ENCODE measurements at regions of chr13 and their contacts with region 1.

Region 1: GRCh38 chr13:75482070-75482819 is at the start of gene TBC1D4:
- DNase-seq: peak in 1 of 2 experiments; percentile 88
- H3K4me3 ChIP-seq: peak within 1 kb of the TSS; percentile 75 to 90 (median 83)
- H3K27ac ChIP-seq: no peak within 1 kb of the TSS
- H3K4me1 ChIP-seq: peaks cover 0 to 7% (median 1%) of the 10 kb centered on the region in 4 experiments; a peak in 2 of 7 replicates
- H3K27me3 ChIP-seq: no peaks in the 10 kb centered on the region
- CTCF ChIP-seq: peak; percentile 50 to 76 (median 65)
- EP300 ChIP-seq: no peak; a peak in 1 of 3 replicates
- POLR2A ChIP-seq: peak; percentile 39 to 68
- RAD21 ChIP-seq: peak; percentile 54 to 68
- total RNA-seq, gene TBC1D4: 37.5 and 39.0 TPM in 2 replicates

Region 2: GRCh38 chr13:75372517-75372916 is 109.7 kb before region 1 on chr13:
- CTCF ChIA-PET with region 1: interaction called, 46 read pairs
- POLR2A ChIA-PET with region 1: no interaction called
- DNase-seq: no peak
- H3K4me3 ChIP-seq: no peak overlapping the region
- H3K27ac ChIP-seq: no peak overlapping the region
- H3K4me1 ChIP-seq: peaks cover 0 to 5% (median 1%) of the 10 kb centered on the region in 4 experiments; a peak in 5 of 7 replicates
- H3K27me3 ChIP-seq: no peaks in the 10 kb centered on the region
- CTCF ChIP-seq: peak in 2 of 3 experiments; percentile 33 to 38; a peak in 2 of 4 replicates
- EP300 ChIP-seq: no peak
- POLR2A ChIP-seq: no peak
- RAD21 ChIP-seq: peak; percentile 42 to 43

Region 3: DNA sequence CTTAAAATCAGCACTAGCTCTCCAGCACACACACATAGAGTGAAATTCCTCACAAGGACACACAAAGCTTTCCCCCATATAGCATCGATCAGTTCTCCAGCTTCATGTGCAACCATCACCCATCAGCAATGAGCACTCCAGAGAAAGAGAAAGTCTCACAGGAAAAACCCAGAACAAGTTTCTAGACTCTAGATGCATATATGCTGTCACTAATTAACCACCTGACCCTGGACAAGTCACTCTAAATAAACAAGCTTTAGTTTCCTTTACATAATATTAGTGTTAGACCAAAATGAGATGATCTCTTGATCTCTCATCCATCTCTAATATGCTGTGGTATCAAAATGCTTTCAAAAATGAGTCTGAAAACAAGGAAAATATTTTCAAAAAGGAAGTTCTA is 81.5 kb before region 1 on chr13:
- CTCF ChIA-PET with region 1: interaction called, 12 read pairs
- POLR2A ChIA-PET with region 1: no interaction called
- DNase-seq: no peak
- H3K4me3 ChIP-seq: no peak overlapping the region
- H3K27ac ChIP-seq: no peak overlapping the region
- H3K4me1 ChIP-seq: no peaks in the 10 kb centered on the region
- H3K27me3 ChIP-seq: no peaks in the 10 kb centered on the region
- CTCF ChIP-seq: no peak
- EP300 ChIP-seq: no peak
- POLR2A ChIP-seq: no peak
- RAD21 ChIP-seq: no peak

Region 4: DNA sequence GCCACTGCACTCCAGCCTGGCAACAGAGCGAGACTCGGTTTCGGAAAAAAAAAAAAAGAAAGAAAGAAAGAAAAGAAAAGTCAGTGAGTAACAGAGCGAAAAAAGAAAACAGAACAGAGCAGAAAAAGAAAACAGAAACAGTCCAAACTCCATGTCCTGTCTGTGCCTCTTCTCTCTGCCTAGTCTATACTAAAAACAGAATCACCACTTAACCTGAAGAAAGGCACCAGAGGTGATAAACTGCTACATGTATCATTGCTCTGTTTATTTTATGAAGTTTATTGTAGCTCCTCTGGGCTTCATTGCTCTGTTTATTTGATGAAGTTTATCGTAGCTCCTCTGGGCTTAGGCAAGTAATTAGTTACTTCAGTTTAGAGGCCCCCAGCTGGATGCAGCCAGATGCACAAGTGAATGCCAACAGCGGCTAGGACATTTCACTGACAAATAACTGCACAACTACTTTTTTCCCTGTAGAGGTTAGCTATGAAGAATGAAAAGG is 39.5 kb before region 1 on chr13:
- CTCF ChIA-PET with region 1: interaction called, 12 read pairs
- POLR2A ChIA-PET with region 1: no interaction called
- DNase-seq: no peak
- H3K4me3 ChIP-seq: no peak overlapping the region
- H3K27ac ChIP-seq: no peak overlapping the region
- H3K4me1 ChIP-seq: no peaks in the 10 kb centered on the region
- H3K27me3 ChIP-seq: no peaks in the 10 kb centered on the region
- CTCF ChIP-seq: no peak
- EP300 ChIP-seq: no peak
- POLR2A ChIP-seq: no peak
- RAD21 ChIP-seq: no peak

Region 5: GRCh38 chr13:75507027-75508001 is 25.1 kb after region 1 on chr13:
- CTCF ChIA-PET with region 1: interaction called, 11 read pairs
- POLR2A ChIA-PET with region 1: interaction called, 3 read pairs
- DNase-seq: no peak
- H3K4me3 ChIP-seq: no peak overlapping the region
- H3K27ac ChIP-seq: no peak overlapping the region
- H3K4me1 ChIP-seq: no peaks in the 10 kb centered on the region
- H3K27me3 ChIP-seq: no peaks in the 10 kb centered on the region
- CTCF ChIP-seq: no peak
- EP300 ChIP-seq: no peak
- POLR2A ChIP-seq: no peak
- RAD21 ChIP-seq: no peak

Measured in H1 (cell line).